Caco-2 (cell line): ENCODE measurements at regions of chr10 and their contacts with region 1.

Region 1: GRCh38 chr10:24118246-24118645 is 90.7 kb upstream of the KIAA1217 start:
- DNase-seq: no peak
- H3K4me3 ChIP-seq: no peak overlapping the region
- H3K4me3 Mint-ChIP-seq: no peak overlapping the region
- H3K27ac Mint-ChIP-seq: no peak overlapping the region
- H3K4me1 ChIP-seq: no peaks in the 10 kb centered on the region
- H3K4me1 Mint-ChIP-seq: no peaks in the 10 kb centered on the region
- H3K27me3 ChIP-seq: no peaks in the 10 kb centered on the region
- H3K27me3 Mint-ChIP-seq: peaks cover 24% of the 10 kb centered on the region
- CTCF ChIP-seq: no peak

Region 2: DNA sequence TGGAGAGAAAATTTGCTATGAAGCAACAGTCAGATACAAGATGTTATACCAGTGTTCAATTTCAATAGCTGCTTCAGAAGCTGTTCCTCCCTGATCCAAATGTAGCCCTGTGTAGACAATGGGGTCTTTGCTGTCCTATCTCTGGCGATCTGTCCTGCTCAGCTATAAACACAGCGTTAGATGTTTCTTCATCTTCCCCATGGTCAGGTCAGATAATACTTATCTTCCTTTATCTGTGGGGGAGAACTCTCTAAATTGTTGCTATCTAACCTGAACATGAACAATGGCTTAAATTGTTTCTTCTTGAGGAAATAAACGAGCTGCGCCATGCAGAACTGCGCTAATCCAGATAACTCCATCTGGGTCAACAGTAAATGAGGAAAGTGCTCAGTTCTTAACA is 75.1 kb after region 1 on chr10:
- CTCF ChIA-PET with region 1: no interaction called
- POLR2A ChIA-PET with region 1: interaction called, 10 read pairs
- intact Hi-C with region 1: no loop called
- DNase-seq: no peak
- H3K4me3 ChIP-seq: no peak overlapping the region
- H3K4me3 Mint-ChIP-seq: no peak overlapping the region
- H3K27ac Mint-ChIP-seq: no peak overlapping the region
- H3K4me1 ChIP-seq: peaks cover 7% of the 10 kb centered on the region
- H3K4me1 Mint-ChIP-seq: no peaks in the 10 kb centered on the region
- H3K27me3 ChIP-seq: no peaks in the 10 kb centered on the region
- H3K27me3 Mint-ChIP-seq: no peaks in the 10 kb centered on the region
- CTCF ChIP-seq: no peak